Calu3 (cell line): ENCODE measurements at regions of chr7 and their contacts with region 1.

Region 1: GRCh38 chr7:44123190-44124003 is at the start of gene POLD2:
- DNase-seq: peak; percentile 100
- H3K4me3 Mint-ChIP-seq: peak within 1 kb of the TSS; percentile 75
- H3K27ac Mint-ChIP-seq: peak within 1 kb of the TSS; percentile 84
- H3K4me1 Mint-ChIP-seq: peaks cover 19% of the 10 kb centered on the region
- H3K27me3 Mint-ChIP-seq: peaks cover 22% of the 10 kb centered on the region
- CTCF ChIP-seq: no peak
- total RNA-seq, gene POLD2: 237 and 246 TPM in 2 replicates

Region 2: GRCh38 chr7:44044315-44045225 is 78.8 kb before region 1 on chr7 and contains the start of gene DBNL:
- CTCF ChIA-PET with region 1: no interaction called
- intact Hi-C with region 1: loop called (anchors 5 kb)
- DNase-seq: peak; percentile 100
- H3K4me3 Mint-ChIP-seq: peak within 1 kb of the TSS; percentile 84
- H3K27ac Mint-ChIP-seq: peak within 1 kb of the TSS; percentile 57
- H3K4me1 Mint-ChIP-seq: peaks cover 59% of the 10 kb centered on the region
- H3K27me3 Mint-ChIP-seq: no peaks in the 10 kb centered on the region
- CTCF ChIP-seq: no peak
- total RNA-seq, gene DBNL: 164 and 180 TPM in 2 replicates